Stomach (tissue), 19 donors: ENCODE measurements at regions of chr3 and their contacts with region 1.

Region 1: GRCh38 chr3:113287803-113288648 is 76.7 kb downstream of the BOC start:
- DNase-seq: peak in 1 of 2 donors; percentile 89
- H3K4me3 ChIP-seq: no peak overlapping the region
- H3K27ac ChIP-seq: peak overlapping the region in 2 of 5 donors; percentile 36 to 62
- H3K4me1 ChIP-seq: peaks cover 0 to 21% (median 11%) of the 10 kb centered on the region in 4 donors
- H3K27me3 ChIP-seq: no peaks in the 10 kb centered on the region
- CTCF ChIP-seq: peak in 6 of 7 experiments; percentile 56 to 99 (median 98)
- EP300 ChIP-seq: no peak
- POLR2A ChIP-seq: no peak

Region 2: DNA sequence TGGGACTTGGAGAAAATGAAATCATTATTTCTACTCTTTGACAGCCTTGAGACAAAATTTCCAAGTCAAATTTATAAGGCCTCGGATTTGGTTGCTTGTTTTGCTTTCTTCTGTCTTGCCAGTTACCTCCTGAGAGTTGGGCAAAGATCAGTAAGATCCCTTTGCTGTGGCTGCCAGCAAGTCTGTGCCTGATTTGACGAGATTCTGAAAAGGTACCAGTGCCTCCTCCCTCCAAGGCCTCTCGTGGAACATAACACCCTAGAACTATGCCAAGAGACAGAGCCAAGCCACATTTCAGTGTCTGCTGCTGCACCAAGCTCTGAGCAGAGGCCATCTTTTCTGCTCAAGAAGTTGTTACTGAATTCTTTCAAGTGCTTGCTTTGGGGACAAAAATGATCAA is 236.2 kb before region 1 on chr3:
- intact Hi-C with region 1: loop called (anchors 2 kb)
- DNase-seq: peak in 1 of 2 donors; percentile 49
- H3K4me3 ChIP-seq: no peak overlapping the region
- H3K27ac ChIP-seq: peak overlapping the region in 3 of 5 donors; percentile 3 to 66 (median 28)
- H3K4me1 ChIP-seq: peaks cover 0 to 20% (median 11%) of the 10 kb centered on the region in 4 donors
- H3K27me3 ChIP-seq: no peaks in the 10 kb centered on the region
- CTCF ChIP-seq: no peak
- EP300 ChIP-seq: no peak
- POLR2A ChIP-seq: no peak

Region 3: GRCh38 chr3:113132571-113132996 is 155.4 kb before region 1 on chr3:
- intact Hi-C with region 1: loop called (anchors 5 kb)
- DNase-seq: no peak
- H3K4me3 ChIP-seq: no peak overlapping the region
- H3K27ac ChIP-seq: no peak overlapping the region
- H3K4me1 ChIP-seq: peaks cover 0 to 13% (median 5%) of the 10 kb centered on the region in 4 donors
- H3K27me3 ChIP-seq: no peaks in the 10 kb centered on the region
- CTCF ChIP-seq: no peak
- EP300 ChIP-seq: no peak
- POLR2A ChIP-seq: no peak

Region 4: DNA sequence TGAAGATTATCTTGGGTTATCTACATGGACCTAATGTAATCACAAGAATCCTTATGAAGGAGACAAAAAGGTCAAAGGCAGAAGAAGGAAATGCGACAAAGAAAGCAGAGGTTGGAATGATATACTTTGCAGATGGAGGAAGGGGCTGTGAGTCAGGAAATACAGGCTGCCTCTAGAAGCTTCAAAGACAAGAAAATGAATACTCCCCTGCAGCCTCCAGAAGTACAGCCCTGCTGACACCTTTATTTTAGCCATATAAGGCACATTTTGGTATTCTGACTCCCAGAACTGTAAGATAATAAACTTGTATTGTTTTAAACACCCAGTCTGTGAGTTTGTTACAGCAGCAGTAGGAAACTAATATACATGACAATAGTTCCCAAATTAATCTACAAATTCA is 303.0 kb after region 1 on chr3:
- intact Hi-C with region 1: no loop called
- DNase-seq: peak in 1 of 2 donors; percentile 18
- H3K4me3 ChIP-seq: no peak overlapping the region
- H3K27ac ChIP-seq: no peak overlapping the region
- H3K4me1 ChIP-seq: no peaks in the 10 kb centered on the region
- H3K27me3 ChIP-seq: no peaks in the 10 kb centered on the region
- CTCF ChIP-seq: no peak
- EP300 ChIP-seq: no peak
- POLR2A ChIP-seq: no peak

Region 5: DNA sequence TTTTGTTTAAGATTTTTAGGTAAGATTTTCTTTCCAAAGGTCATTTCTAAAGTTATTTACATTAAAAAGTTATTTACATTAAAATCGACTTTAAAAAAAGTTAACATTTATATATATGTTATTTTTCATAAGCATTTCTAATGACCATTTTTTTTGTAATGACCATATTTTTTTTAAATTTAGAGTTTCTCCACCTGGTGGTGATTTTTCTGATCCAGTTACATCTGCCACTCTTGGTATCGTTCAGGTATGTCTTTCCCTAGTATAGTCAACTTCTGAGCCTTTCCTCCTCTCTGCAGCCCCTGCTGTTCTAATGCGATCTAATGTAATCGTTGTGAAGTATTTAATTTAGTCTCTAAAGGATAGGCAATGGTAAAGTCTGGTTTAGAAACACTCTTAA is 507.7 kb after region 1 on chr3:
- intact Hi-C with region 1: no loop called
- DNase-seq: no peak
- H3K4me3 ChIP-seq: no peak overlapping the region
- H3K27ac ChIP-seq: no peak overlapping the region
- H3K4me1 ChIP-seq: no peaks in the 10 kb centered on the region
- H3K27me3 ChIP-seq: no peaks in the 10 kb centered on the region
- CTCF ChIP-seq: no peak
- EP300 ChIP-seq: no peak
- POLR2A ChIP-seq: no peak

Region 6: DNA sequence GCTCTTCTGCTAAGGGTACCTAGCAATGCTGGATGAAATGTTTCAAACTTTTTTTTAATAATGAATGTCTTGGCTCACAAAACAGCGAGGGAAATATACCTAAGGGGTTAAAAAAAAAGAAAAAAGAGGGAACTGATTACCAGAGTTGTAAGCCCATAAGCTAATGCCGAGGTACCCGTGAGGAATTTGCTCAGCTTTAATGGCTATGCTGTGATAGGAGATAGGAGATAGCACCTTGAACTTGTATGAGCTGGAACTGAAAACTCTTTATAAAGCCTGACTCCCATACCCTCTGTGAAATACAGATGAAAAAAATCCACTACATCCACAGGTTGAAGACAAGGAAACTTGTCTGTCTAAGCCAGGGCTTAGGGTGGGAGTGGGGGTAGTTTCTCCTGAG is 564.5 kb after region 1 on chr3:
- intact Hi-C with region 1: no loop called
- DNase-seq: no peak
- H3K4me3 ChIP-seq: no peak overlapping the region
- H3K27ac ChIP-seq: no peak overlapping the region
- H3K4me1 ChIP-seq: no peaks in the 10 kb centered on the region
- H3K27me3 ChIP-seq: no peaks in the 10 kb centered on the region
- CTCF ChIP-seq: no peak
- EP300 ChIP-seq: no peak
- POLR2A ChIP-seq: no peak